Psoas muscle (tissue), 8 donors: ENCODE measurements at regions of chr12 and their contacts with region 1.

Region 1: DNA sequence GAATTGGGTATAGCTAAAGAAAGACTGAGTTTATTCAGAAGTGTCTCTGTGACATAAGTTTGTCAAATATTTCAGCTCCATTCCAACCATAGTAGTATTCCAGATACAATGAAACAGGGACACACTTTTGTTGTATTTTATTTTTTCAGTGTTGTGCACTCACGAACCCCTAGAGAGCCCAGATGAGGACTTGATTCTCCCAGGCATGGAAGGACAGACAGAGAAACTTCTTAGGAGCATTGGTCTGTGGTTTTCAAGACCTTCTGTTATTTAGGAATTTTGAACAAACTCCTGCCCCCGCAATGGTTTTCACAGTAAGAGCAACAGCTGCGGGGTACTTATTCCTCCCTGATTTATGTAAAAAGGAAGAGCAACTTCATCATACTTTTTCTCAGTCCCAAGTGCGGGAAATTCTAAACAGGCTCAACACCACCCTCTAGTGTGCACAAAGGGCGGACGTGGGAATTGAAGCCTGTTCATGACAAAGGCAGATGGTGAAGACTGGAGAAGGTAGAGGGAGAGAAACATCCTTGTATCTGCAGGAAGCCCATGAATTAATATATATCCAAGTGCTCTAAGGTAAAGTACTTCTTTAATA is 147.6 kb downstream of the PAH start:
- DNase-seq: peak; percentile 39 to 58
- ATAC-seq: peak; percentile 57 to 90 (median 78)
- H3K4me3 ChIP-seq: no peak overlapping the region
- H3K27ac ChIP-seq: no peak overlapping the region
- H3K4me1 ChIP-seq: no peaks in the 10 kb centered on the region
- H3K27me3 ChIP-seq: no peaks in the 10 kb centered on the region
- CTCF ChIP-seq: peak; percentile 60

Region 2: GRCh38 chr12:102498471-102498870 is 270.9 kb before region 1 on chr12:
- intact Hi-C with region 1: loop called in 1 of 2 experiments (anchors 10 kb)
- DNase-seq: no peak
- ATAC-seq: no peak
- H3K4me3 ChIP-seq: no peak overlapping the region
- H3K27ac ChIP-seq: no peak overlapping the region
- H3K4me1 ChIP-seq: no peaks in the 10 kb centered on the region
- H3K27me3 ChIP-seq: no peaks in the 10 kb centered on the region
- CTCF ChIP-seq: no peak

Region 3: GRCh38 chr12:102659200-102659911 is 110.1 kb before region 1 on chr12:
- intact Hi-C with region 1: no loop called
- DNase-seq: no peak
- ATAC-seq: no peak
- H3K4me3 ChIP-seq: no peak overlapping the region
- H3K27ac ChIP-seq: no peak overlapping the region
- H3K4me1 ChIP-seq: no peaks in the 10 kb centered on the region
- H3K27me3 ChIP-seq: no peaks in the 10 kb centered on the region
- CTCF ChIP-seq: no peak

Region 4: GRCh38 chr12:102675672-102676071 is 93.7 kb before region 1 on chr12:
- intact Hi-C with region 1: no loop called
- DNase-seq: no peak
- ATAC-seq: no peak
- H3K4me3 ChIP-seq: no peak overlapping the region
- H3K27ac ChIP-seq: no peak overlapping the region
- H3K4me1 ChIP-seq: no peaks in the 10 kb centered on the region
- H3K27me3 ChIP-seq: no peaks in the 10 kb centered on the region
- CTCF ChIP-seq: no peak